Activated B cell treated with CpG ODN at 0.5 μM for 24 hours (primary cell): ENCODE measurements at regions of chr6 and their contacts with region 1.

Region 1: GRCh38 chr6:53725791-53726431 is 60.4 kb upstream of the KLHL31 start:
- DNase-seq: peak; percentile 63
- ATAC-seq: peak; percentile 87
- H3K4me3 Mint-ChIP-seq: no peak overlapping the region
- H3K27ac Mint-ChIP-seq: no peak overlapping the region
- H3K4me1 Mint-ChIP-seq: peaks cover 5% of the 10 kb centered on the region
- H3K27me3 Mint-ChIP-seq: peaks cover 9% of the 10 kb centered on the region
- CTCF ChIP-seq: peak; percentile 97

Region 2: GRCh38 chr6:52491203-52492069 is 1234.5 kb before region 1 on chr6:
- CTCF ChIA-PET with region 1: no interaction called
- POLR2A ChIA-PET with region 1: no interaction called
- intact Hi-C with region 1: no loop called
- DNase-seq: no peak
- ATAC-seq: peak; percentile 57
- H3K4me3 Mint-ChIP-seq: peak overlapping the region; percentile 71
- H3K27ac Mint-ChIP-seq: peak overlapping the region; percentile 86
- H3K4me1 Mint-ChIP-seq: peaks cover 68% of the 10 kb centered on the region
- H3K27me3 Mint-ChIP-seq: no peaks in the 10 kb centered on the region
- CTCF ChIP-seq: no peak

Region 3: DNA sequence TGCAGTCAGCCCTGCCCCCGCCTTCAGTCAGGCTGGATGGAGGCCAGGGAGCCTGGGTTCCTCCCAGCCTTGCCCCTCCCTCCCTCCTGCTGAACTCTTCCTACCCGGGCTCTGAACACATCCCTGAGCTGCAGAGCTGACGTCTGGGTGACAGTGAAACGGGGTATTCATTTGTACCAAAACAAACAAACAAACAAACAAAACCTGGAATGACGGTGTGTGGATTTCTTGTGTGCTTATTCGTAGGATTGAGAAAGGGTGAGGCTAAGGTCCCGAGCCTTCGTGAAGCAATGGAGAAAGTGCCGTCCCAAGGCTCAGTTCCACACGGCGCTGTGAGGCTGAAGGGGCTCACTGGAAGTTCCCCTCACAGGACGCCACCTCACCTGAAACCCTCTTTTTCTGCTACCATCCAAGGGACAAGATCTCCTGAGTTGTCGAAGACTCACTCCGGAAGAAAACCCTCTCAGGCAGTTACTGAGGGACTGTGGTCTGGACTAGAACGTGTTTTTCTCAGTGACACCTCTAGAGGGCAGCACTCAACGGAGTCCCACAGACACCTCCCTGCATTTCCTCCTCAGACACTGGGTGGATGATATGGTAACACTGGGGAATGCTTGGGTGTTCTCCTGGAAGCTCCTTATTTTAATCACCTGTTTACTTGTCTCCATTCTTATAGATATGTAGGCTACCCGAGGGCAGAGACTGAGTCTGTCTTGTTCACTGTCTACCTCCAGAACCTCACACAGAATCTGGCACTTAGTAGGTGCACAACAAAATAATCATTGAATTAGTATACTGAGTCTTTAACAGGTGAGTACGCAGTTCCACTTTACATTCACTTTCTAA is 843.7 kb before region 1 on chr6:
- CTCF ChIA-PET with region 1: no interaction called
- POLR2A ChIA-PET with region 1: no interaction called
- intact Hi-C with region 1: loop called (anchors 1 kb)
- DNase-seq: peak; percentile 31
- ATAC-seq: peak; percentile 98
- H3K4me3 Mint-ChIP-seq: peak overlapping the region; percentile 82
- H3K27ac Mint-ChIP-seq: peak overlapping the region; percentile 20
- H3K4me1 Mint-ChIP-seq: peaks cover 2% of the 10 kb centered on the region
- H3K27me3 Mint-ChIP-seq: no peaks in the 10 kb centered on the region
- CTCF ChIP-seq: peak; percentile 75

Region 4: DNA sequence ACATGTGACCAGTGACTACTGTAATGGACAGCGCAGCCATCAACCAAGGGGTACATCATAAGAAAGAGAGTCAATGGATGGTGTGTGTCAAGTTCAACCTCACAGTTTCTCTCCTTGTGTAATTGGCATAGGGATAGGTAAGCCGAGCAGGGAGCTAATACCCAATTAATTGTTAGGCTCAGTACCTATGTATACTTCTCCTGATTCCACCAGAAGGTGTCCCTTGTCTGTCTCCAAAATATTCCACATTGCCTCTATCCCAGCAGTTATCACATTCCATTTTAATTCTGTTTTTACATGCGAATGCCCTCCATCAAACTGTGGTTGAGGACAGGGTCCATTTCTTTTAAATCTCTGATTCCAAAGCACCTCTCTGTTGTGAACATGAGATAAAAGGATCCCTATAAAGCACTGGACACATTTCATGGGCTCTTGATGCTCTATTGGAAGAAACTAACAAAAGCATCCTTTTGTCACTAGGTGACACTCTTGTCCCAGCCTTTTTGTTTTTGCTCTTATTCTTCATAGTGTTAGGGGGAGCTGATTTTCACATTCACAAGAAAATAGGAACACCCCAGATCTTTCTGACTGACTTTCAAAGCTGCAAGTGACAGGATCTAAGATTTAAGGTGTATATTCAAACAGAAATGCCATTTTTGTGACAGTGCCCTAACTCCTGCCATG is 621.8 kb before region 1 on chr6:
- CTCF ChIA-PET with region 1: no interaction called
- POLR2A ChIA-PET with region 1: no interaction called
- intact Hi-C with region 1: loop called (anchors 1 kb)
- DNase-seq: no peak
- ATAC-seq: peak; percentile 28
- H3K4me3 Mint-ChIP-seq: no peak overlapping the region
- H3K27ac Mint-ChIP-seq: no peak overlapping the region
- H3K4me1 Mint-ChIP-seq: no peaks in the 10 kb centered on the region
- H3K27me3 Mint-ChIP-seq: no peaks in the 10 kb centered on the region
- CTCF ChIP-seq: no peak

Region 5: GRCh38 chr6:53492860-53493634 is 232.9 kb before region 1 on chr6:
- CTCF ChIA-PET with region 1: interaction called, 189 read pairs
- POLR2A ChIA-PET with region 1: interaction called, 4 read pairs
- intact Hi-C with region 1: loop called (anchors 1 kb)
- DNase-seq: no peak
- ATAC-seq: peak; percentile 14
- H3K4me3 Mint-ChIP-seq: no peak overlapping the region
- H3K27ac Mint-ChIP-seq: no peak overlapping the region
- H3K4me1 Mint-ChIP-seq: peaks cover 5% of the 10 kb centered on the region
- H3K27me3 Mint-ChIP-seq: no peaks in the 10 kb centered on the region
- CTCF ChIP-seq: peak; percentile 64

Region 6: GRCh38 chr6:53961679-53962370 is 235.9 kb after region 1 on chr6:
- CTCF ChIA-PET with region 1: no interaction called
- POLR2A ChIA-PET with region 1: no interaction called
- intact Hi-C with region 1: no loop called
- DNase-seq: no peak
- ATAC-seq: no peak
- H3K4me3 Mint-ChIP-seq: no peak overlapping the region
- H3K27ac Mint-ChIP-seq: no peak overlapping the region
- H3K4me1 Mint-ChIP-seq: no peaks in the 10 kb centered on the region
- H3K27me3 Mint-ChIP-seq: peaks cover 7% of the 10 kb centered on the region
- CTCF ChIP-seq: no peak